Activated T-helper 2 cell treated with anti-CD3 and anti-CD28 coated beads, Interferon-gamma antibody, Interleukin-2, Interleukin-4, amounts not matched to agents 10 μg/mL and 5 μg/mL and 100 μg/mL, durations not matched to agents 14 hours and 24 hours and 36 hours (primary cell): ENCODE measurements at regions of chr6 and their contacts with region 1.

Region 1: GRCh38 chr6:10510592-10511367 is 10.4 kb upstream of the GCNT2 start:
- DNase-seq: peak; percentile 30
- H3K4me3 Mint-ChIP-seq: no peak overlapping the region
- H3K27ac Mint-ChIP-seq: no peak overlapping the region
- H3K4me1 Mint-ChIP-seq: no peaks in the 10 kb centered on the region
- H3K27me3 Mint-ChIP-seq: peaks cover 8% of the 10 kb centered on the region

Region 2: DNA sequence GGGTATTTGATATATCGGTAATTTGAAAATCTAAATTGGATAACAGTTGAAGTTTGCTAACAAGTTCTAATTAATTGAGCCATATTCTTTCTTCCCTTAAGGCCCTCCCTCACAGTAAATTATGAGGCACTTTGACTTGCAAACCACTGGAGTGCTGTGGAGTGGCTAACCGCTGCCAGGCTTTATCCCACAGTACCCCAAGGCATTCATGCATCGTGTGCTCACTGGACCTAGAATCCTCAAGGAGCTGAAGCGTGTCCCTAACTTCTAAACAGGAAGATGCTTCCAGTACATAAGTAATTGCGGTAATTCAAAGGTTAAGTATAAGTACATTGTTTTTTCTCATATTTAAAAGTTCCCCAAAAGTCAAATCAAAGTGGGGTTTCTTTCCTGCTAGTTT is 595.8 kb before region 1 on chr6:
- intact Hi-C with region 1: no loop called
- DNase-seq: no peak
- H3K4me3 Mint-ChIP-seq: no peak overlapping the region
- H3K27ac Mint-ChIP-seq: no peak overlapping the region
- H3K4me1 Mint-ChIP-seq: no peaks in the 10 kb centered on the region
- H3K27me3 Mint-ChIP-seq: no peaks in the 10 kb centered on the region

Region 3: DNA sequence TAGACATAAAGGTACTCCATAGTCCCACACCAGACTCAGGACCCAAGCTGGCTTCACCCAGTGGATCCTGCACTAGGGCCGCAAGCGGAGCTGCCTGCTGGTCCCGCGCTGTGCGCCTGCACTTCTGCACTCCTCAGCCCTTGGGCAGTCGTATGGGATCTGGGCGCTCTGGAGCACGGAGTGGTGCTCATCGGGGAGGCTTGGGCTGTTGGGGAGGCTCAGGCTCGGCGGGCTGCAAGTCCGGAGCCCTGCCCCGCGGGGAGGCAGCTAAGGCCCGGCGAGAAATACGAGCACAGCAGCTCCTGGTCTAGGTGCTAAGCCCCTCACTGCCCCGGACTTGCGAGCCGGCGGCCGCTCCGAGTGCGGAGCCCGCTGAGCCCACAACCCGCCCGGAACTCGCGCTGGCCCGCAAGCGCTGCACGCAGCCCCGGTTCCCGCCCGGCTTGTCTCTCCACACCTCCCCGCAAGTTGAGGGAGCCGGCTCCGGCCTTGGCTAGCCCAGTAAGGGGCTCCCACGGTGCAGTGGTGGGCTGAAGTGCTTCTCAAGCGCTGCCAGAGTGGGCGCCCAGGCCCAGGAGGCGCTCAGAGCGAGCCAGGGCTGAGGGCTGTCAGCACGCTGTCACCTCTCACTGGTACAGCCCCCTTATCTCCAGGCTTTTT is 23.0 kb before region 1 on chr6:
- intact Hi-C with region 1: no loop called
- DNase-seq: no peak
- H3K4me3 Mint-ChIP-seq: no peak overlapping the region
- H3K27ac Mint-ChIP-seq: no peak overlapping the region
- H3K4me1 Mint-ChIP-seq: no peaks in the 10 kb centered on the region
- H3K27me3 Mint-ChIP-seq: no peaks in the 10 kb centered on the region

Region 4: DNA sequence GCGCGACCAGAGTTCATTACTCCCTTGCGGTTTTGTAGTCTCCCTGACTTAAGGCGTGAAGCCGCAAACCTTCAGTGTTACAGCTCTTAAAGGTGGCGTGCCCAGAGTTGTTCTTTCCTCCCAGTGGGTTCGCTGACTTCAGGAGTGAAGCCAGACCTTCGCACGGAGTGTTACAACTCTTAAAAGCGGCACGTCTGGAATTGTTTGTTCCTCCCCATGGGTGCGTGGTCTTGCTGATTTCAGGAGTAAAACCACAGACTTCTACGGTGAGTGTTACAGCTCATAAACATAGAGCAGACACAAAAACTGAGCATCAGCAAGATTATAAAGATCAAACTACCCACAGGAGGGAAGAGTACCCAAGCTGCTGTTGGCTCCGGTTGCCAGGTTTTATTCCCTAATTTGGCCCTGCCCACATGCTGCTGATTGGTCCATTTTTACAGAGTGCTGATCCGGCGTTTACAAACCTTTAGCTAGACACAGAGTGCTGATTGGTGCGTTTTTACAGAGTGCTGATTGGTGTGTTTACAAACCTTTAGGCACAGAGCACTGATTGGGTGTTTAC is 222.5 kb after region 1 on chr6:
- intact Hi-C with region 1: no loop called
- DNase-seq: no peak
- H3K4me3 Mint-ChIP-seq: no peak overlapping the region
- H3K27ac Mint-ChIP-seq: no peak overlapping the region
- H3K4me1 Mint-ChIP-seq: no peaks in the 10 kb centered on the region
- H3K27me3 Mint-ChIP-seq: no peaks in the 10 kb centered on the region

Region 5: DNA sequence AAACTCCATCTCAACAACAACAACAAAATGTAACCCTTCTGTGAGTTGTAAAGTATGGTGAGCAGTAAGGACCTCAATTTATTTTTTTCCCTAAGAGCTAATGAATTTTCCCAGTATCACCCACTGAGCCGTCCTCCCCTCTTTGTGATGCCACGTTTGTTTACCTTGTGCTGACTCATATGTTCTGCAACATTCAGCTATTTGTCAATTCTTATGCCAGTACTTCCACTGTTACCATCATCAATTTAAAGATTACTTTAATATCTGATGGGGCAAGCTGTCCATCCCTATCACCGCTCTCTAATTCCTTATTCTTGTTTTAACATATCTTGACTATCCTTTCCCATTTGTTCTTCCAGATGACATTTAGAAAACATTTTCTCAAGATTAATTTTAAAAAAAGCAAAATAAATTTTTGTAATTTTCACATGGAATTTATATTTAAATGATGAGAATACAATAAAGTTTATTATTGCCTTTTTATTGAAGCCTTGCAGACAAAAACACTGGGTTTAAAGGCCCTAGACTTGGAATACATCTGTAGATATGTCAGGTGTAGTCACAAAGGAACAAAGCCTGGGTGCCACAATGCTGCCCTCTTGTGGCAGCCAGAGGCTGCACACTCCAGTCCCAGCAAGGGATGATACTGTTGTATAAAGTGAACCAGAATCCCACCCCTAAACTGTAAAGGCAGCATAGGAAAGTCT is 290.2 kb after region 1 on chr6:
- intact Hi-C with region 1: loop called (anchors 1 kb)
- DNase-seq: peak; percentile 47
- H3K4me3 Mint-ChIP-seq: no peak overlapping the region
- H3K27ac Mint-ChIP-seq: no peak overlapping the region
- H3K4me1 Mint-ChIP-seq: no peaks in the 10 kb centered on the region
- H3K27me3 Mint-ChIP-seq: no peaks in the 10 kb centered on the region